Sciatic nerve (tissue), 2 donors: ENCODE measurements at regions of chr9 and their contacts with region 1.

Region 1: GRCh38 chr9:4464911-4465513 is 25.3 kb upstream of the SLC1A1 start:
- DNase-seq: no peak
- ATAC-seq: no peak

Region 2: DNA sequence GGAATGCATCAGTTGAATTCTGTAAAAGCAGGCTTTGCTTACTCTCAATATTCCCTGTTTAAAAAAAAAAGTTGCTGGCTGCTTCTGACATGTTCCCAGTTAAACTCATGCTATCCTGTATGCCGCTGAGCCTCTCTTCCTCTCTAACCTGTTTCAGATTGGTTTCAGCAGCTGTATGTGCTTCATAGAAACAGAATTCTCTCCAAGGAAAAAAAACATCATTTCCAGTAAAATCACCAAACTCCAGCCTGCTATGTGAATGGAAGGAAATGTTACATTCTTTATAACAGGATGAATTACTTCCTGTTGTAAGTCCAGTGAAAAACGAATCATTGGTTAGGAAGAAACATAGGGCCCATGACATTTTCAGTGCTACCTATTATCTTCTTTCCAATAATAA is 1773.4 kb before region 1 on chr9:
- intact Hi-C with region 1: loop called (anchors 5 kb)
- DNase-seq: no peak
- ATAC-seq: no peak

Region 3: DNA sequence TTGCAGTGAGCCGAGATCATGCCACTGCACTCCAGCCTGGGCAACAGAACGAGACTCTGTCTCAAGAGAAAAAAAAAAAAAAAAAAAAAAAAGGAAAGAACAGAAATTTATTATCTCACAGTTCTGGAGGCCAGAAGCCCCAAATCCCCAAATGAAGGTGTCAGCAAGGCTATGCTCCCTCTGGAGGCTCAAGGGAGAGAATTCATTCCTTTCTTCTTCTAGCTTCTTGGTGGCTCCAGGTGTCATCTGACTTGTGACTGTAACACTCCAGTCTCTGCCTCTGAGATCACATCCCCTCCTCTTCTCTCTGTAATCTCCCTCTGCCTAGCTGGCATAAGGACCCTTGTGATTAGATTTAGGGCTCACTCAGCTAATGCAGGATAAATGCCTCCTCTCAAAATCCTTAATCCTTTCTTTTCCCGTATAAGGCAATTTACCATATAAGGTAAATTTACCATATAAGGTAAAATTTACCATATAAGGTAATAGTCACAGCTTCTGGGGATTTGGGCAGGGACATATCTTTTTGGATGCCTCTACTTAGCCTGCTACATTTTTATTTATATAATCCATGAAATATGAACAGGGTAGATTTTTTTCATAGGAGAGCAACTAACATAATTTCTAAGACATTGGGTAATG is 1303.2 kb before region 1 on chr9:
- intact Hi-C with region 1: no loop called
- DNase-seq: no peak
- ATAC-seq: no peak

Region 4: DNA sequence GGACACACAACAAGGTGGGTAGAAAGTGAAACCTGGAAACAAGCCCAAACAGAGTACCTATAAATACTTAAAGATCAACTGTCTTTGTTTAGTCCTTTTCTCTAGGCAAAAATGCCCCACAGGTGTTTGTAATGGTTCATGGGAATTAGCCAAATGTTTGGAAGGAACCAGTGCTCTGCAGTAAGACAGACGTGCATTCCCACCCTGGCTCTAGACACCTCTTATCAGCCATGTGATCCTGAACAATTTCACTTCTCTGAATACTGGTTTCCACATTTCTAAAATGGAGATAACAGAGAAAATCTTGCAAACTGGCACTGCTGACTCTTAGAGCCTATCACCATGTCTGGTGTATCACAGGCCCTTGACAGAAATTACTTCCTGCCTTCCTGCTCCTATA is 195.2 kb before region 1 on chr9:
- intact Hi-C with region 1: no loop called
- DNase-seq: no peak
- ATAC-seq: no peak